Brain microvascular endothelial cell (primary cell): ENCODE measurements at regions of chr11 and their contacts with region 1.

Region 1: DNA sequence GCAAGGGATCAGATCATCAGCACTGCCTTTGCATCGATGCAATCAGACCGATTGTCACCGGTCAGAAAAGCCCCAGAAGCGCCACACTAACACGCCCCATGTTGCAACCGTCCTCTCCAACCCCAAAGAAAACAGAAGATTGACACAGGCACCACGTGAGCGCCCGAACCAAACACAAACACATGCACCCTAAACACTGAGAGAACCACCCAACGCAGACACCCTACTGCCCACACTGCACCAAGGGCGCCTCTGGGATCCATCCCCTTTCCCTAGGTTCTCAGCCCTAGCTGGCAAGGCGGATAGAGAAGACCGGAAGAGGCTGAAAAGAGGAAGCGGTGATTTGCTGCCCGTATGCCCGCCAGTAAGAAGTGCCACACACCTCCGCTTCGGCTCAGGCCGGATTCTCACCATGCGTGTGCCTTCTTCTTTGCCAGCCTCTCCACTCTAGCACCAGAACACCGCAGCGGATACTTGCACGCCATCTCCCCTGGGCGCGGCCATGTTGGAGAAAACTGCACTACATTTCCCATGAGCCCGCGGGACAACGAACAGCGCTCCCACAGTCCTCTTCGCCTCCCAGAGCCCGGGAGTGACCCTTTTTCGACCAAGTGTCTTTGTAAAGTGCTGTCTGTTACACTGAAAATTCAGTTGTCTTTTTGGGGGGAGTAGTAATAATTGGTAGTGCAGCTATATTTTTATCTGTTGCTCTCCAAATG is at the start of gene ALKBH8:
- DNase-seq: peak; percentile 74
- H3K4me3 ChIP-seq: peak within 1 kb of the TSS; percentile 99
- H3K27ac ChIP-seq: peak within 1 kb of the TSS; percentile 83
- H3K27me3 ChIP-seq: no peaks in the 10 kb centered on the region
- CTCF ChIP-seq: no peak

Region 2: GRCh38 chr11:107689317-107690202 is 124.2 kb after region 1 on chr11:
- in situ Hi-C with region 1: loop called (anchors 25 kb)
- DNase-seq: peak; percentile 76
- H3K4me3 ChIP-seq: no peak overlapping the region
- H3K27ac ChIP-seq: no peak overlapping the region
- H3K27me3 ChIP-seq: no peaks in the 10 kb centered on the region
- CTCF ChIP-seq: peak; percentile 73